ENCODE measurements at regions of chr6 and their contacts with region 1.

Region 1: GRCh38 chr6:108133594-108134179 is 32.1 kb upstream of the NR2E1 start:
- H3K4me3 ChIP-seq: peak overlapping the region; percentile 32
- H3K27ac ChIP-seq: peak overlapping the region; percentile 50
- H3K4me1 ChIP-seq: no peaks in the 10 kb centered on the region
- CTCF ChIP-seq: peak; percentile 26; the same call in 1 of the 2 replicates

Region 2: DNA sequence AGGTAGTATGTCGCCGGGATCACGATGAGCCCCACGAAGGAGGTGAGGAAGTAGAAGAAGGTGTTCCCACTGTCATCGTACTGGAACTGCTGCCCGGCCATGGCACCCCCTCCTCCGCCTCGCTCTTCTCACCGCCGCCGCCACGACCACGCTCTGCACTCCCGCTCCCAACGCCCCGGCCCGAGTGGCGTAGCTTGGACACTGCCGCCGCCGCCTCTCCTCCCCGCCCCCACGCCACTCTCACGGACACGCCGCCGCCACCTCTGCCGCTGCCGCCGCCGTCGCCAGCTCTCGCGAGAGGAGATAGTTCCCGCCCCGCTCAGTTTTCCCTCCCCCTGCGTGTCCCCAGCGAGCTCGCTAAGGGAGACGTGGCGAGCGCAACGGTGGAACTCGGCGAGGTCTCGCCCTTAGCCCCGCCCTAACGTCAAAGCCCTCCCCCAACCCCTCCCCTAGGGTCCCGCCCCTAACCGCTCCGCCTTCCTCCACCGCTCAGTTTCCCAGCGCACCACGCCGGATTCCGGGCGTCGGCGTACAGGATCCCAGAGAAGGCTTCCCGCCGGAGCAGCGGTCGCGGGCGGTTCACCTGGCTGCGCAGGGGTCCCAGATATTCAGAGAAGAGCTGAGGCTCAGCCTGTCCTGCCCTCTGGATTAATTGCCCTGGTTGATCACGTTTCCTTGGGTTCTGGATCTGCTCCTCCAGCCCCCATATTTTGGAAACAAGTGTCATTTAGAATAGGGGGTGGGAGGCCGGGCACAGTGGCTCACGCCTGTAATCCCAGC is 175.6 kb before region 1 on chr6 and contains the start of gene SEC63:
- CTCF ChIA-PET with region 1: no interaction called
- POLR2A ChIA-PET with region 1: interaction called, 10 read pairs
- H3K4me3 ChIP-seq: peak within 1 kb of the TSS; percentile 59
- H3K27ac ChIP-seq: peak within 1 kb of the TSS; percentile 88
- H3K4me1 ChIP-seq: no peaks in the 10 kb centered on the region; the same call in 1 of the 2 replicates
- CTCF ChIP-seq: peak; percentile 71

Region 3: DNA sequence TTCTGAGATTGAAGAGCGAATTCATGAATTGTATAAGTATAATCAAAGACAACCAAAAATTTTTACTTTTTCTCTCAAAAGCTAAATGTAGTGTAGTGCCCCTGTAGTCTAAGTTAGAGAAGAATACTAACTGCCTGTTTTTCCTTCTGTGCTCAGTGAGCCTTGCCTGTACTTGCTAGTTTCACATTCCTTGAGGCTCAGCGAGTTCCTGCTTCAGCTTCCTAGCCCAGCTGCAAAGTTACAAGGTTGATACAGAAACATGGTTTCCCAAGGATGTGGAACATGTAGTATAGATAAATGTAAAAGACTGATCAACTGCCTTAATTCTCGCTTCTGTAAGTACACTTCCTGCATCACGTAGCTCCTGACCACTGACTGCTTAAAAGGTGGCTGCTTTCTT is 142.6 kb before region 1 on chr6:
- CTCF ChIA-PET with region 1: no interaction called
- POLR2A ChIA-PET with region 1: no interaction called
- H3K4me3 ChIP-seq: no peak overlapping the region
- H3K27ac ChIP-seq: no peak overlapping the region
- H3K4me1 ChIP-seq: no peaks in the 10 kb centered on the region
- CTCF ChIP-seq: no peak

Region 4: GRCh38 chr6:108165714-108166663 is 32.3 kb after region 1 on chr6 and contains the start of gene NR2E1:
- CTCF ChIA-PET with region 1: interaction called, 5 read pairs
- POLR2A ChIA-PET with region 1: interaction called, 10 read pairs
- H3K4me3 ChIP-seq: peak within 1 kb of the TSS; percentile 48
- H3K27ac ChIP-seq: peak within 1 kb of the TSS; percentile 29; the same call in 1 of the 2 replicates
- H3K4me1 ChIP-seq: no peaks in the 10 kb centered on the region
- CTCF ChIP-seq: peak; percentile 65

Region 5: GRCh38 chr6:108260809-108261569 is 127.3 kb after region 1 on chr6 and contains the start of gene SNX3:
- CTCF ChIA-PET with region 1: no interaction called
- POLR2A ChIA-PET with region 1: interaction called, 12 read pairs
- H3K4me3 ChIP-seq: peak within 1 kb of the TSS; percentile 91
- H3K27ac ChIP-seq: peak within 1 kb of the TSS; percentile 71
- H3K4me1 ChIP-seq: 0 out of 2 replicates have a peak, but pooled peaks cover 3% of the 10 kb centered on the region
- CTCF ChIP-seq: peak; percentile 60